PC-3 (cell line): ENCODE measurements at regions of chr7 and their contacts with region 1.

Region 1: DNA sequence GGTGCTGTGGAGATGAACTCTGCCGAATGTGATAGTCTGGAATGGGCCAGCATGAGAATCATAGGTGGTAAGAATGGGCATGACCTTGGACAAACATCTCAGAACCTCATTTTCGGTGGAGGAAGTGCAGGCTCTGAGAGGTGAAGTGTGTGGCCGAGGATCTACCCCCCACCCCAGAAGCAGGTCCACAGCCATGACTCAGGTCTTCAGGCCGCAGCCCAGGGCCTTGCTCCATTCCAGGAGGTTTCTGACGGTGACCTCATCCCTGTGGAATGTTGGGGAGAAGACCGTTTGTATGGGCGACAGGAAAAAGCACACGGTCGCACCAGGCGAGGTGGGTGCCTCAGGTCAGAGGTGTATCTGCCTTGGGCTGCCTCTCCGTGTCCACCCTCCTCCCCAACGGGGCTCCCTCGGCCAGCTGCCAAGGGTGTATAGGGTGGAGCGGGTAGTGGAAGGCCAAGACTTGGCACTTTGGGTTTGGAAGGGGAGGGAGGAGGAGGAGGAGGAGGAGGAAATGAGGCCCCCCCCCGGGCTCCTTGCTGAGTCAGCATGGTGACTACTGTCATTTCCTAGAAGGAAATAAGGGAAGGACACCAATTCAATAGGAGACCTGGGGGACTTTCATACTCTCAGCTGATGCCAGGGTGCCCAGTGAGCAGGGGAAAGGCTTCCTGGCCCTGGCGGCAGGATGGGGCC is 168.0 kb upstream of the RHEB start:
- DNase-seq: peak; percentile 99
- ATAC-seq: peak; percentile 95
- H3K4me3 ChIP-seq: no peak overlapping the region
- H3K27ac ChIP-seq: peak overlapping the region; percentile 85
- H3K4me1 ChIP-seq: peaks cover 28% of the 10 kb centered on the region
- H3K27me3 ChIP-seq: no peaks in the 10 kb centered on the region
- CTCF ChIP-seq: no peak

Region 2: GRCh38 chr7:151649939-151650560 is 37.6 kb before region 1 on chr7:
- CTCF ChIA-PET with region 1: interaction called, 3 read pairs
- POLR2A ChIA-PET with region 1: no interaction called
- intact Hi-C with region 1: loop called (anchors 2 kb)
- DNase-seq: no peak
- ATAC-seq: no peak
- H3K4me3 ChIP-seq: no peak overlapping the region
- H3K27ac ChIP-seq: peak overlapping the region; percentile 74
- H3K4me1 ChIP-seq: peaks cover 43% of the 10 kb centered on the region
- H3K27me3 ChIP-seq: no peaks in the 10 kb centered on the region
- CTCF ChIP-seq: no peak

Region 3: GRCh38 chr7:151658778-151659177 is 28.9 kb before region 1 on chr7:
- CTCF ChIA-PET with region 1: no interaction called
- POLR2A ChIA-PET with region 1: no interaction called
- intact Hi-C with region 1: loop called (anchors 2 kb)
- DNase-seq: peak; percentile 59
- ATAC-seq: peak; percentile 44
- H3K4me3 ChIP-seq: no peak overlapping the region
- H3K27ac ChIP-seq: peak overlapping the region; percentile 81
- H3K4me1 ChIP-seq: peaks cover 42% of the 10 kb centered on the region
- H3K27me3 ChIP-seq: no peaks in the 10 kb centered on the region
- CTCF ChIP-seq: no peak

Region 4: GRCh38 chr7:151769188-151769841 is 81.6 kb after region 1 on chr7:
- CTCF ChIA-PET with region 1: no interaction called
- POLR2A ChIA-PET with region 1: no interaction called
- intact Hi-C with region 1: no loop called
- DNase-seq: no peak
- ATAC-seq: no peak
- H3K4me3 ChIP-seq: no peak overlapping the region
- H3K27ac ChIP-seq: no peak overlapping the region
- H3K4me1 ChIP-seq: no peaks in the 10 kb centered on the region
- H3K27me3 ChIP-seq: no peaks in the 10 kb centered on the region
- CTCF ChIP-seq: no peak

Region 5: GRCh38 chr7:151796091-151796870 is 108.6 kb after region 1 on chr7:
- CTCF ChIA-PET with region 1: no interaction called
- POLR2A ChIA-PET with region 1: no interaction called
- intact Hi-C with region 1: no loop called
- DNase-seq: peak; percentile 90
- ATAC-seq: peak; percentile 95
- H3K4me3 ChIP-seq: peak overlapping the region; percentile 4; the same call in 1 of the 2 replicates
- H3K27ac ChIP-seq: peak overlapping the region; percentile 86
- H3K4me1 ChIP-seq: peaks cover 42% of the 10 kb centered on the region
- H3K27me3 ChIP-seq: no peaks in the 10 kb centered on the region
- CTCF ChIP-seq: no peak